ENCODE measurements at regions of chr16 and their contacts with region 1.

Region 1: GRCh38 chr16:13935408-13935807 is 15.5 kb downstream of the ERCC4 start:
- DNase-seq: peak in 1 of 2 experiments; percentile 91
- H3K4me3 ChIP-seq: no peak overlapping the region
- H3K27ac ChIP-seq: no peak overlapping the region
- H3K4me1 ChIP-seq: no peaks in the 10 kb centered on the region
- H3K27me3 ChIP-seq: no peaks in the 10 kb centered on the region
- CTCF ChIP-seq: peak; percentile 70 to 96 (median 74)
- EP300 ChIP-seq: no peak
- POLR2A ChIP-seq: no peak
- RAD21 ChIP-seq: peak; percentile 55 to 67

Region 2: DNA sequence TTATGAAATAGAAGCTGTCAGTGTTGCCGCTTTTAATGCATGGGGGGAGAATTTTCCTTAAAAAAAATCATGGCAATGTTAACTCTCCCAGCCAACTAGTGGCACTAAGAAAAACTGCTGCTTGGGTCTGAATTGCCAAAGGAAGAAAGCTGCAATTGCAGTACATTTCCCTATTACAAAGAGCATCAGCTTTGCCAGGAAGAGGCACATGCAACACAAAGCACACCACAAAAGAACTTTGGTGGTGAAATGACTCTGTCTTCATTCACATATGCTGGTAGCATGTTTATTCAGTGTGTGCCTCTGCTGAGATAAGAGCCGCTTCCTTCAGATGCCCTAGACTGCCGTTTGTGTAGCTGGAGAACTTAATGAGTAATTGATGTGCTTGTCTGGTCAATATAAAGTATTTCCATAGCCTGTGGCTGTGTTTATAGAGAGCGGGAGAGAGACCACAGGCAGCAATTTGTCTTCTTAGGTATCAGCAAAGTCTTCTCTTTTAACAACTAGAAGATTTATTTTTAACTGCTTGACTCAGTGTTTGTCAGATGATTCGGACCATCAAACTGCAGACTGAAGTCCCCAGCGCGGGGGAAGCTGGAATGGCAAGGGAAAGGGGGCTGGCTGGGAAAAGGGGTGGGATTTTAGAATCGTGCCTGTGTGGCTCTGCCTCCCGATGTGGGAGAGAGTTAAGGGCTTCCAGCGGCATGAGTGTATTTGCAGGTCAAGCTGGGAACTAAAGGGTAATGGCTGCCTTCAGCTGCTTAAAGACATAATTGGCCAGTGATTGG is 250.8 kb after region 1 on chr16:
- CTCF ChIA-PET with region 1: interaction called, 13 read pairs
- POLR2A ChIA-PET with region 1: no interaction called
- DNase-seq: peak; percentile 13 to 63
- H3K4me3 ChIP-seq: peak overlapping the region; percentile 4 to 32 (median 26); a peak in 5 of 8 replicates
- H3K27ac ChIP-seq: no peak overlapping the region
- H3K4me1 ChIP-seq: peaks cover 3 to 12% (median 7%) of the 10 kb centered on the region in 4 experiments
- H3K27me3 ChIP-seq: no peaks in the 10 kb centered on the region
- CTCF ChIP-seq: peak in 2 of 3 experiments; percentile 46 to 55; a peak in 2 of 4 replicates
- EP300 ChIP-seq: no peak
- POLR2A ChIP-seq: no peak
- RAD21 ChIP-seq: peak; percentile 30 to 42; a peak in 3 of 4 replicates